ENCODE measurements at regions of chr1 and their contacts with region 1.

Region 1: DNA sequence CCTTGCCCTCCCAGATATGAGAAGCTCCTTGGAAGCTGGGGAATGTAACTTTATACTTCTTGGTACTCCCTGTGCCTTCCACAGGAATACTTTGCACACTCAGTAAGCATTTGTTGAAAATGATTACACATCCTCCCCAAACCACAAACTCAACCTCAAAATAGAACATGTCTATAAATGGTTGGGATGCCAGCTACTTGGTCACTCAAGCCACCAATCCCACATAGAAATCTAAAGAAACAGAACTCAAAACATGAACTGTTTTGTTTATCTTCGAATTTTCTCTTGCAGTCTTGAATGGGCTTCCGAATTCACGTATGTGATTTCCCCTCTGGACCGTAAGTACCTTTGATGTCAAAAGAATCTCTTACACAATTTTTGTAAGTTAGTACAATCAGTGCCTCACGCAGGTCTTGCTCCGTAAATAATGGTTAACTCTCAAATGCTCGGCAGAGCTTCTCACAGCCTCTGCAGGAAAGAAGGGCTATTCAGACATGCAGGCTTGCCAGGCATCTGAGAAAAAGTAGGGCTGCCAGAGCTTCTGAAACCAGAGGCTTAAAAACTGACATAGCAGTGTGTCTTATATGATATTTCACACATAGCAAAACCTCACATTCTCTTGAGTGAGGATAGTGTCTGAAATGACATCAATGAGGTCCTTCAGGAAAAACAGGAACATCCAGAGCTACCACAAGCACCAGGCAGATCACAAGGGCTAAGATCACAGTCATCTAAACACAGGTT is 26.8 kb downstream of the SORT1 start:
- DNase-seq: no peak
- ATAC-seq: peak; percentile 24
- H3K4me3 Mint-ChIP-seq: no peak overlapping the region
- H3K27ac Mint-ChIP-seq: peak overlapping the region; percentile 1
- H3K4me1 Mint-ChIP-seq: peaks cover 20% of the 10 kb centered on the region
- H3K27me3 Mint-ChIP-seq: peaks cover 15% of the 10 kb centered on the region

Region 2: GRCh38 chr1:109391626-109392025 is 20.7 kb after region 1 on chr1:
- CTCF ChIA-PET with region 1: interaction called, 4 read pairs
- POLR2A ChIA-PET with region 1: no interaction called
- intact Hi-C with region 1: loop called in 1 of 2 experiments (anchors 2 kb)
- DNase-seq: no peak
- ATAC-seq: peak; percentile 61
- H3K4me3 Mint-ChIP-seq: no peak overlapping the region
- H3K27ac Mint-ChIP-seq: no peak overlapping the region
- H3K4me1 Mint-ChIP-seq: peaks cover 5% of the 10 kb centered on the region
- H3K27me3 Mint-ChIP-seq: peaks cover 53% of the 10 kb centered on the region

Measured in activated CD4-positive, alpha-beta T cell treated with anti-CD3 and anti-CD28 coated beads for 36 hours (primary cell).